CD4-positive, alpha-beta T cell (primary cell): ENCODE measurements at regions of chr7 and their contacts with region 1.

Region 1: GRCh38 chr7:30740424-30741181 is 11.3 kb upstream of the INMT start:
- DNase-seq: peak; percentile 56 to 85 (median 73)
- ATAC-seq: peak; percentile 66
- H3K4me3 ChIP-seq: no peak overlapping the region
- H3K4me3 Mint-ChIP-seq: peak overlapping the region; percentile 46
- H3K27ac ChIP-seq: no peak overlapping the region
- H3K27ac Mint-ChIP-seq: peak overlapping the region; percentile 70
- H3K4me1 ChIP-seq: peaks cover 51% of the 10 kb centered on the region
- H3K4me1 Mint-ChIP-seq: peaks cover 35% of the 10 kb centered on the region
- H3K27me3 ChIP-seq: no peaks in the 10 kb centered on the region
- H3K27me3 Mint-ChIP-seq: no peaks in the 10 kb centered on the region
- CTCF ChIP-seq: peak; percentile 99

Region 2: DNA sequence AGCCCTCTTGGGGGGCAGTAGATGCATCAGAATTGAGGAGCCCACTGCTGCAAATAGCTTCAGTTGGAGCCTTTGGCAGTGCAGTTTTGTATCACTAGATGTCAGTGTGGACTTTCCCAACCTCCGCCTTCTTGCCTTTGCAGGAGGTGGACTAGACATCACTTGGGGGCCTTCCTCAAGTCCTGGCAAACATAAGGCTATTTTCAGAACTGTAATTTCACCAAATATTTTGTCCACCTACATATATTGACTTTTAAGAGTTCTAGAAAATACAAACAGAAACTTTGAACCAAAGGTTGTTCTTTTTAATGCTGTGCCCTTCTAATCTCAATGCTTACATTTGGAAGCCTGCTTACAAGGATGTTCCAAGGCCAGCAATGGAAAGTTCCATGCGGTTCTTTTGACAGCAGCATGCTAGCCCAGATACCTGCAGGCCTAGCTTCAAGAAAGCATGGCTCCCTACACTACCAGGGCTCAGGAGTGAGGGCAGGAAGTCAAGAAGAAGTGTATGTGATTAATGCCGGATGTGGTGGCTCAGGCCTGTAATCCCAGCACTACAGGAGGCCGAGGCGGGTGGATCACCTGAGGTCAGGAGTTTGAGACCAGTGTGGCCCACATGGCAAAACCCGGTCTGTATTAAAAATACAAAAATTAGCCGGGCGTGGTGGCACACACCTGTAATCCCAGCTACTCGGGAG is 464.3 kb before region 1 on chr7:
- CTCF ChIA-PET with region 1: no interaction called
- POLR2A ChIA-PET with region 1: no interaction called
- intact Hi-C with region 1: loop called in 1 of 2 experiments (anchors 10 kb)
- DNase-seq: peak; percentile 33 to 78 (median 40)
- ATAC-seq: peak; percentile 86
- H3K4me3 ChIP-seq: no peak overlapping the region
- H3K4me3 Mint-ChIP-seq: no peak overlapping the region
- H3K27ac ChIP-seq: no peak overlapping the region
- H3K27ac Mint-ChIP-seq: no peak overlapping the region
- H3K4me1 ChIP-seq: peaks cover 6% of the 10 kb centered on the region
- H3K4me1 Mint-ChIP-seq: no peaks in the 10 kb centered on the region
- H3K27me3 ChIP-seq: no peaks in the 10 kb centered on the region
- H3K27me3 Mint-ChIP-seq: no peaks in the 10 kb centered on the region
- CTCF ChIP-seq: peak; percentile 75

Region 3: GRCh38 chr7:30548762-30549344 is 191.8 kb before region 1 on chr7:
- CTCF ChIA-PET with region 1: interaction called, 4 read pairs
- POLR2A ChIA-PET with region 1: no interaction called
- intact Hi-C with region 1: loop called (anchors 1 kb)
- DNase-seq: peak in 9 of 14 experiments; percentile 4 to 61 (median 37)
- ATAC-seq: peak; percentile 56
- H3K4me3 ChIP-seq: no peak overlapping the region
- H3K4me3 Mint-ChIP-seq: no peak overlapping the region
- H3K27ac ChIP-seq: no peak overlapping the region
- H3K27ac Mint-ChIP-seq: no peak overlapping the region
- H3K4me1 ChIP-seq: no peaks in the 10 kb centered on the region
- H3K4me1 Mint-ChIP-seq: peaks cover 5% of the 10 kb centered on the region
- H3K27me3 ChIP-seq: no peaks in the 10 kb centered on the region
- H3K27me3 Mint-ChIP-seq: no peaks in the 10 kb centered on the region
- CTCF ChIP-seq: peak; percentile 83

Region 4: DNA sequence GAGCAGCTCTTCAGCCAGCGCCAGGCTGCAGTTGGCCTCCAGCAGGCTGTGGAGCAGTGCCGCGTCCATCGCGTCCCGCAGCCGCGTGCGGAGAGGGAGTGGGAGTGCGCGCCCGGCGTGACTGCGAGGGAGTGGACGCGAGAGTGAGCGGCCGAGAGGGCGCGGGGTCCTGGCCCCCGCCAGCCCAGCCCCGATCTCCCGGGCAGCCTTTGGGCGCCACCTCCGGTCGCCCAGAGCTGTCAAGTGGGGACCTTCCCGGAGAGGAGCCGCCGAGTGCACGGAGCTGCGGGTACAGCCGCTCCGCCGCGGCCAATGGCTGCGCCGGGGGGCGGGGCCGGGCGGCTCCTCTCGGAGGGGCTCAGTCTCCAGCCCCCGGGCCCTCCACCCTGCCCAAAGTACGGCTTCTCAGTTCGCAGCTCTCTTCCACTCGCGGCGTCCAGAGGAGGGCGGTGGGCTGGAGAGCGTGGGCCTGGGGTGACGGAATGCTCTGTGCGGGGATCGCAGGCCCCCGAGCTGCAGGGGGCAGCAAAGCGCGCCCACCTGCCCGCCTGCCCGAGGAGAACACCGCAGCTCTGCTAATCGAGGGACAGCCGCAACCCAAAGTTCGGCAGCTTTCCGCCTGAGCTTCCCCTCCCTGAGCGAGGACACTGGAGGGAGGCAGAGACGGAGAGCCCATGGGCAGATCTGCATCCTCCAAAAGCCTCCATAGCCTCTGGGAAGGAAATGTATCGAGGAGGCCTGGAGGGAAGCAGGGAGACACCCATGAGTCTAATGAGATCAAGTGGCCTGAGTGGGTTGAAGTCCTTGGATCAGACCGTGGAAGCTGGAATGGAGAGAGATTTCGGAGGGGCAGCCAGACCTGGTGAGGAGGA is 58.2 kb before region 1 on chr7 and contains the start of gene CRHR2:
- CTCF ChIA-PET with region 1: interaction called, 11 read pairs
- POLR2A ChIA-PET with region 1: interaction called, 9 read pairs
- intact Hi-C with region 1: loop called (anchors 1 kb)
- DNase-seq: peak in 9 of 14 experiments; percentile 3 to 64 (median 23)
- ATAC-seq: peak; percentile 74
- H3K4me3 ChIP-seq: peak within 1 kb of the TSS; percentile 35
- H3K4me3 Mint-ChIP-seq: peak within 1 kb of the TSS; percentile 85
- H3K27ac ChIP-seq: no peak within 1 kb of the TSS
- H3K27ac Mint-ChIP-seq: no peak within 1 kb of the TSS
- H3K4me1 ChIP-seq: peaks cover 18% of the 10 kb centered on the region
- H3K4me1 Mint-ChIP-seq: peaks cover 21% of the 10 kb centered on the region
- H3K27me3 ChIP-seq: peaks cover 40 to 55% of the 10 kb centered on the region in 2 experiments
- H3K27me3 Mint-ChIP-seq: peaks cover 73% of the 10 kb centered on the region
- CTCF ChIP-seq: peak; percentile 45
- total RNA-seq, gene CRHR2: not detected

Region 5: DNA sequence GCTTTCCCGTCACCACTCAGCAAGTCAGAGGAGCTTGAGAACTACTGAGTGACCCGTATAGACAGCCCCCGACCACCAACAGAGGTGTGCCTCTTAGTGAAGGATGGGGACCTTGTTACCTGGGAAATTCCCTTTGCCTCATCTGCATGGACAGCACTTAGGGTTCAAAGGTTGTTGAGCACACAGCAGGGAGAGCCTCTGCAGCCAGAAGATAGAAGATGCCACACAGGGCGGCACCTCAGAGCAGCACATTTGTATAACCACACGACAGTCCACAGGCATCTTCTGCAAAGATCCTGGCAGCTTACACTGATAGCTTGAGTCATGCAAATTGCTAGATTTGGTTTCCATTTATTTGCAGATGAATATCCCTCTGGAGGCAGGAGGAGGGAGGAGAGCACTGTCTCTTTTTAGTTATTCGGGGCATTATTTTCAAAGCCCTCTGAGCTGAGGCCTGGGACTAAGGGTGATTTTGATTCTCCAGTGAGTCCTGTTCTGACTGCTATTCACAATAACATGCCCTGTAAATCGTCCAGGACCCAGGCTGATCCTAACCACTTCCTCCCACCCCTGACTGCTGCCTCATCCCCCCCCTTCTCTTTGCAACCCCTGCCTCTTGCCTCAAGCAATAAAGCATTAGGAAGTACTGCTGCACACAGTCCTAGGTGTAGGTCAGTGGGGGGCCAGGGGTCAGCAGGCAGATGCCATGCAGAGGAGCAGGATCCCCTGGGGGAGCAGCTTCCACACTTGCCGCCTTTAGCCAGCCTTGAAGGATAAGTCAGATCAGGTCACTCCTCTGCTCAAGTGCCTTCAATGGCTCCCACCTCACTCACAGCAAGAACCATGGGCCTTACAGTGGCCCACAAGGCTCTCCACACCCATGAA is 13.3 kb before region 1 on chr7:
- CTCF ChIA-PET with region 1: interaction called, 8 read pairs
- POLR2A ChIA-PET with region 1: interaction called, 115 read pairs
- intact Hi-C with region 1: loop called (anchors 1 kb)
- DNase-seq: peak; percentile 26 to 93 (median 56)
- ATAC-seq: peak; percentile 93
- H3K4me3 ChIP-seq: peak overlapping the region; percentile 62
- H3K4me3 Mint-ChIP-seq: peak overlapping the region; percentile 78
- H3K27ac ChIP-seq: peak overlapping the region; percentile 47 to 71
- H3K27ac Mint-ChIP-seq: peak overlapping the region; percentile 85
- H3K4me1 ChIP-seq: peaks cover 61% of the 10 kb centered on the region
- H3K4me1 Mint-ChIP-seq: peaks cover 75% of the 10 kb centered on the region
- H3K27me3 ChIP-seq: no peaks in the 10 kb centered on the region
- H3K27me3 Mint-ChIP-seq: no peaks in the 10 kb centered on the region
- CTCF ChIP-seq: no peak

Region 6: DNA sequence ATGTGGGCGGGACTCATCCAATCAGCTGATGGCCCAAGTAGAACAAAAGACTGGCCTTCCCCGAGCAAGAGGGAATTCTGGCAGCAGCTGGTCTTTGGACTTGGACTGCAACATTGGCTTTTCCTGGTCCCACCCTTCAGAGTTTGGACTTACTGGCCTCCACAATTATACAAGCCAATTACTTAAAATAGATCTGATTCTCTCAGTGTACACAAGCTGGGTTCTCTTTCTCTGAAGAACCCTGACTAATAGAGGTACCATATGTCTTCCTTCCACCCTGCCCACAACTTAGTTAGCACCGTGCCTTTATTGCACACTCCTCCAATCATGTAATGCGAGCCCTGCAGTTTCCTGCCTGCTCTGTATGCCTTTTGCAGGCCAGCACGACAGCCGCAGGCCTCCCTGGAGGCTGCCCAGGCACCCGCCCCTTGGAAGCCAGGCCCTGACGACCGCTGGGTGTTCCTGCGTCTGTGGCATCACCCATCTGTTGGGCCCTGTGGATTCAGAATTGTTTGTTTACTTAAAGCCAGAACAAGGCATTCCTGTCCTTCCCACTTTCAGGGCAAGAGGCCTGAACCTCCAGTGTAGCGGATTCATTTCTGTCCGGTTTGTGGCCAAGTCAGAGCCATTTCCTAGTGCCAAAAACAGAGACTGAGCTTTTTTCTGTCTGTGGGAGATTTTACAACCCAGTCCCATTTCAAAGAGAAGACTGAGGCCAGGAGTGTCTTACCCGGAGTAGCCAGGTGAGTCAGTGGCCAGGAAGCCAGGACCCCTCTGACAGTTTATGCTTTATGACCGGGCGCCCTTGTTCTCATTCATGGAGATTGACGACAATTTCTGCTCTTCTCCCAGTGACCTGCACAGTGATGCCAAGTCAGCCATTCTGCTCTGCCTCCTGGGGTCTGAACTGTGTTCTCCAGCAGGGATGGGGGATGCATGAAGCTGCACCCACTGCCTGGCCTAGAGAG is 10.4 kb after region 1 on chr7:
- CTCF ChIA-PET with region 1: no interaction called
- POLR2A ChIA-PET with region 1: no interaction called
- intact Hi-C with region 1: no loop called
- DNase-seq: no peak
- ATAC-seq: no peak
- H3K4me3 ChIP-seq: no peak overlapping the region
- H3K4me3 Mint-ChIP-seq: no peak overlapping the region
- H3K27ac ChIP-seq: no peak overlapping the region
- H3K27ac Mint-ChIP-seq: no peak overlapping the region
- H3K4me1 ChIP-seq: no peaks in the 10 kb centered on the region
- H3K4me1 Mint-ChIP-seq: no peaks in the 10 kb centered on the region
- H3K27me3 ChIP-seq: no peaks in the 10 kb centered on the region
- H3K27me3 Mint-ChIP-seq: no peaks in the 10 kb centered on the region
- CTCF ChIP-seq: no peak

Region 7: DNA sequence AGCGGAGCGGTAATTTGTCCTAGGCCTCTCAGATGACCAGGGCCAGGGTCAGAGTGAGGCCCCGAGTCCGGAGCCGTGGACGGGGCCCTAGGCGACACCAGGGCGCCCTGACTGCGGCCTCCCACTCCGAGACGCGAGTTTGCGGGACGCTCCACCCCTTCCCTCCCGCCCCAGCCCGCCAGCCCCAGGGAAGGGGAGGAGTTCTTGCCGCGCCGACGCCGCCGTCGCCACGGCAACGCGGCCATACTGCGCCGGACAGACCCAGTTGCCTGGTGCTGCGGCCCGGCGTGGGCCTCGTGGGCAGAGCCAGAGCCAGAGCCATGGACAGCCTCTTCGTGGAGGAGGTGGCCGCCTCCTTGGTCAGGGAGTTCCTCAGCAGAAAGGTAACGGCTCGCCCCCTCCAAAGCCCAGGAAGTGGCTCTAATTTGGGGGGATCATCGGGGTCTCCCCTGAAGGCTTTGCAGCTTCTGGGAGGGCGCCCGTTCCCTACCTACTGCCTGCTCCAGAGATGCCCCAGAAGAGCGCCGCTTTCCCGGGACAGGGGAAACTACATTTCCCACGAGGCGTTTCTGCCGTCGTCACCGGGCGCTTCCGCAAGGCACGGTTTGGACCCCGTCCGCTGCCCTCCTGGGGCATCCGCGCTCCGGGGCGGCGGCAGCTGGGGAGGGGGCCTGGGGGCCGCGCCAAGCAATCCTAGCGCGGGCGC is 30.7 kb after region 1 on chr7 and contains the start of gene MINDY4:
- CTCF ChIA-PET with region 1: no interaction called
- POLR2A ChIA-PET with region 1: no interaction called
- intact Hi-C with region 1: no loop called
- DNase-seq: peak; percentile 30 to 85 (median 58)
- ATAC-seq: peak; percentile 92
- H3K4me3 ChIP-seq: peak within 1 kb of the TSS; percentile 90
- H3K4me3 Mint-ChIP-seq: peak within 1 kb of the TSS; percentile 90
- H3K27ac ChIP-seq: peak within 1 kb of the TSS; percentile 33 to 48
- H3K27ac Mint-ChIP-seq: peak within 1 kb of the TSS; percentile 53
- H3K4me1 ChIP-seq: peaks cover 10% of the 10 kb centered on the region
- H3K4me1 Mint-ChIP-seq: peaks cover 12% of the 10 kb centered on the region
- H3K27me3 ChIP-seq: no peaks in the 10 kb centered on the region
- H3K27me3 Mint-ChIP-seq: no peaks in the 10 kb centered on the region
- CTCF ChIP-seq: no peak
- total RNA-seq, gene MINDY4: 0.36 to 0.60 TPM

Region 8: GRCh38 chr7:30938435-30939316 is 198.1 kb after region 1 on chr7:
- CTCF ChIA-PET with region 1: no interaction called
- POLR2A ChIA-PET with region 1: no interaction called
- intact Hi-C with region 1: no loop called
- DNase-seq: peak; percentile 31 to 70 (median 46)
- ATAC-seq: no peak
- H3K4me3 ChIP-seq: no peak overlapping the region
- H3K4me3 Mint-ChIP-seq: no peak overlapping the region
- H3K27ac ChIP-seq: no peak overlapping the region
- H3K27ac Mint-ChIP-seq: no peak overlapping the region
- H3K4me1 ChIP-seq: peaks cover 5% of the 10 kb centered on the region
- H3K4me1 Mint-ChIP-seq: no peaks in the 10 kb centered on the region
- H3K27me3 ChIP-seq: peaks cover 8 to 23% of the 10 kb centered on the region in 2 experiments
- H3K27me3 Mint-ChIP-seq: peaks cover 58% of the 10 kb centered on the region
- CTCF ChIP-seq: peak; percentile 79

Region 9: DNA sequence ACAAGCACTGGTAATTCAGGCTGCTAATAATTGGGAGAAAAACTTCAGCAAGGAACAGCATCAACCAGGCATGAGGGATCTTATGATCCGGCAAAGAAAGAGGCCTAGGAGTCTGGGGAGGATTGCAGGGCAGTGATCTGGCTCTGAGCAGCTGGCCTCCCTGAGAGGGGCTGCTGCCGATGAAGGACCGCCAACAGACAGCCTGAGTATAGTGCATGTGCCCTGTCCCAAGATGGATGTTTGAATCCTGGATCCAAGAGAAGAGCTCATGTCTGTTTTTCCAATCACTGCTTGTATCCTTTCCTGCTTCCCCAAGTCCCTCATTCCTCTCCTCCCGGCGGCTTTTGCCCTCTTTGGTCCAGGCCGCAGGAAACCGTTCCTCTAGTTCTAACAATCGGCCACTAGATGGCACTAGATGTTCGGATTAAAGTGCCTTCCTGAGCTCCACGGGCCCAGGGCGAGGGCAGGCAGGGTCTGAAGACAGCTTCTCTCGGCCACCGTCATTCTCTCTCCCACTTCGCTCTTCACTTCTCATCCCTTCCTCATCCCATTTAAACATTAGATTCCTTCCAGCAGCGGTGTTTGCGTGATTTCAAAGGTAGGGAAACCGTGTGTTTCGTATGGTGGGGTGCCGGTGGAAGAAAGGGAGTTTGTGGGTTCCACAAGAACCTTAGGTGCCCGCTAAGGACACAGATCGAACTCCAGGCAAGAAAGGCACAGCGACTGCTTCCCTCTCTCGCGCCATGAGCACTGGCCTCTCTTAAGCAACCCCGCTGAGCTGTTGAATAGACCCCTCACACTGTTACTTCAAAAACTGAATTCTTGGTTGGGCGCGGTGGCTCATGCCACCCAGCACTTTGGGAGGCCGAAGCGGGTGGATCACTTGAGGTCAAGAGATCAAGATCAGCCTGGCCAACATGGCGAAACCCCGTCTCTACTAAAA is 393.9 kb after region 1 on chr7:
- CTCF ChIA-PET with region 1: no interaction called
- POLR2A ChIA-PET with region 1: no interaction called
- intact Hi-C with region 1: no loop called
- DNase-seq: peak in 11 of 14 experiments; percentile 10 to 63 (median 24)
- ATAC-seq: peak; percentile 41
- H3K4me3 ChIP-seq: no peak overlapping the region
- H3K4me3 Mint-ChIP-seq: no peak overlapping the region
- H3K27ac ChIP-seq: no peak overlapping the region
- H3K27ac Mint-ChIP-seq: no peak overlapping the region
- H3K4me1 ChIP-seq: no peaks in the 10 kb centered on the region
- H3K4me1 Mint-ChIP-seq: no peaks in the 10 kb centered on the region
- H3K27me3 ChIP-seq: no peaks in the 10 kb centered on the region
- H3K27me3 Mint-ChIP-seq: no peaks in the 10 kb centered on the region
- CTCF ChIP-seq: peak; percentile 67